Mammary epithelial cell (primary cell): ENCODE measurements at regions of chr9 and their contacts with region 1.

Region 1: GRCh38 chr9:74379718-74380117 is 117.4 kb upstream of the RORB start:
- DNase-seq: peak; percentile 66
- H3K4me3 ChIP-seq: no peak overlapping the region
- H3K27ac ChIP-seq: no peak overlapping the region
- H3K4me1 ChIP-seq: peaks cover 3% of the 10 kb centered on the region
- H3K27me3 ChIP-seq: no peaks in the 10 kb centered on the region
- CTCF ChIP-seq: peak; percentile 70 to 77

Region 2: GRCh38 chr9:73269430-73270101 is 1110.2 kb before region 1 on chr9:
- CTCF ChIA-PET with region 1: no interaction called
- dilution Hi-C with region 1: no loop called
- in situ Hi-C with region 1: no loop called
- intact Hi-C with region 1: loop called (anchors 5 kb)
- DNase-seq: peak; percentile 27
- H3K4me3 ChIP-seq: no peak overlapping the region
- H3K27ac ChIP-seq: no peak overlapping the region
- H3K4me1 ChIP-seq: peaks cover 10% of the 10 kb centered on the region
- H3K27me3 ChIP-seq: no peaks in the 10 kb centered on the region
- CTCF ChIP-seq: peak; percentile 46 to 51

Region 3: GRCh38 chr9:74006935-74007334 is 372.8 kb before region 1 on chr9:
- CTCF ChIA-PET with region 1: no interaction called
- dilution Hi-C with region 1: no loop called
- in situ Hi-C with region 1: no loop called
- intact Hi-C with region 1: loop called (anchors 10 kb)
- DNase-seq: no peak
- H3K4me3 ChIP-seq: no peak overlapping the region
- H3K27ac ChIP-seq: no peak overlapping the region
- H3K4me1 ChIP-seq: no peaks in the 10 kb centered on the region
- H3K27me3 ChIP-seq: no peaks in the 10 kb centered on the region
- CTCF ChIP-seq: peak in 1 of 2 donors; percentile 50

Region 4: GRCh38 chr9:74304598-74304997 is 75.1 kb before region 1 on chr9:
- CTCF ChIA-PET with region 1: no interaction called
- dilution Hi-C with region 1: no loop called
- in situ Hi-C with region 1: no loop called
- intact Hi-C with region 1: no loop called
- DNase-seq: no peak
- H3K4me3 ChIP-seq: no peak overlapping the region
- H3K27ac ChIP-seq: no peak overlapping the region
- H3K4me1 ChIP-seq: no peaks in the 10 kb centered on the region
- H3K27me3 ChIP-seq: no peaks in the 10 kb centered on the region
- CTCF ChIP-seq: no peak

Region 5: GRCh38 chr9:74570879-74571512 is 191.3 kb after region 1 on chr9:
- CTCF ChIA-PET with region 1: no interaction called
- dilution Hi-C with region 1: no loop called
- in situ Hi-C with region 1: loop called in 1 of 2 experiments (anchors 25 kb)
- intact Hi-C with region 1: no loop called
- DNase-seq: peak; percentile 9
- H3K4me3 ChIP-seq: no peak overlapping the region
- H3K27ac ChIP-seq: no peak overlapping the region
- H3K4me1 ChIP-seq: no peaks in the 10 kb centered on the region
- H3K27me3 ChIP-seq: no peaks in the 10 kb centered on the region
- CTCF ChIP-seq: peak; percentile 76 to 86